Activated CD8-positive, alpha-beta T cell treated with anti-CD3 and anti-CD28 coated beads for 36 hours (primary cell): ENCODE measurements at regions of chrX and their contacts with region 1.

Region 1: GRCh38 chrX:20252381-20253231 is 14.1 kb downstream of the RPS6KA3 start:
- DNase-seq: peak; percentile 72
- ATAC-seq: peak; percentile 86
- H3K4me3 Mint-ChIP-seq: no peak overlapping the region
- H3K27ac Mint-ChIP-seq: peak overlapping the region; percentile 84
- H3K4me1 Mint-ChIP-seq: peaks cover 53% of the 10 kb centered on the region
- H3K27me3 Mint-ChIP-seq: no peaks in the 10 kb centered on the region
- CTCF ChIP-seq: peak; percentile 56

Region 2: GRCh38 chrX:20141281-20142220 is 111.1 kb before region 1 on chrX and contains the start of gene EIF1AX:
- CTCF ChIA-PET with region 1: no interaction called
- POLR2A ChIA-PET with region 1: no interaction called
- intact Hi-C with region 1: loop called (anchors 10 kb)
- DNase-seq: peak; percentile 97
- ATAC-seq: peak; percentile 99
- H3K4me3 Mint-ChIP-seq: peak within 1 kb of the TSS; percentile 81
- H3K27ac Mint-ChIP-seq: peak within 1 kb of the TSS; percentile 90
- H3K4me1 Mint-ChIP-seq: peaks cover 36% of the 10 kb centered on the region
- H3K27me3 Mint-ChIP-seq: no peaks in the 10 kb centered on the region
- CTCF ChIP-seq: no peak
- total RNA-seq, gene EIF1AX: 138 to 147 TPM

Region 3: GRCh38 chrX:20378291-20378920 is 125.8 kb after region 1 on chrX:
- CTCF ChIA-PET with region 1: interaction called, 5 read pairs
- POLR2A ChIA-PET with region 1: interaction called, 4 read pairs
- intact Hi-C with region 1: loop called (anchors 10 kb)
- DNase-seq: peak; percentile 53
- ATAC-seq: peak; percentile 82
- H3K4me3 Mint-ChIP-seq: no peak overlapping the region
- H3K27ac Mint-ChIP-seq: peak overlapping the region; percentile 86
- H3K4me1 Mint-ChIP-seq: peaks cover 36% of the 10 kb centered on the region
- H3K27me3 Mint-ChIP-seq: no peaks in the 10 kb centered on the region
- CTCF ChIP-seq: no peak

Region 4: DNA sequence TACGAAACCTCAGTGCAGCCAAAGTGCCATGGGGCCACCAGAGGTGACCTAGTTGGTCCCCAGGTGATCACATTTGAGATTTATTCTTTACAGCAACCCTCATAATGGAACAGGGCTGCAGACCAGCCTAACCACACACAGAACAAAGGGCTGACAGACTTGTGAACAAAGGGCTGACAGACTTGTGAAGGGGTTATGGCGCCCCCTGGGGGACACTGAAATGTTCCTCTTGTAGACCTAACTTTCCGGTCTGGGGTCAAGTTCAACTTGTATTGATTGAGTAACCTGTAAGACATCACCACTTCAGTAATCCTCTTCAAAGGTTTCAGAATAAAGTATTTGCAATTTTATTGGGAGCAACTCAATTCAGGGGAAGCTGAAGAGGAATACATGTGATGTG is 190.0 kb after region 1 on chrX:
- CTCF ChIA-PET with region 1: interaction called, 15 read pairs
- POLR2A ChIA-PET with region 1: interaction called, 3 read pairs
- intact Hi-C with region 1: loop called (anchors 2 kb)
- DNase-seq: peak; percentile 95
- ATAC-seq: peak; percentile 74
- H3K4me3 Mint-ChIP-seq: no peak overlapping the region
- H3K27ac Mint-ChIP-seq: no peak overlapping the region
- H3K4me1 Mint-ChIP-seq: peaks cover 70% of the 10 kb centered on the region
- H3K27me3 Mint-ChIP-seq: no peaks in the 10 kb centered on the region
- CTCF ChIP-seq: peak; percentile 54